MCF 10A (cell line): ENCODE measurements at regions of chr4 and their contacts with region 1.

Region 1: DNA sequence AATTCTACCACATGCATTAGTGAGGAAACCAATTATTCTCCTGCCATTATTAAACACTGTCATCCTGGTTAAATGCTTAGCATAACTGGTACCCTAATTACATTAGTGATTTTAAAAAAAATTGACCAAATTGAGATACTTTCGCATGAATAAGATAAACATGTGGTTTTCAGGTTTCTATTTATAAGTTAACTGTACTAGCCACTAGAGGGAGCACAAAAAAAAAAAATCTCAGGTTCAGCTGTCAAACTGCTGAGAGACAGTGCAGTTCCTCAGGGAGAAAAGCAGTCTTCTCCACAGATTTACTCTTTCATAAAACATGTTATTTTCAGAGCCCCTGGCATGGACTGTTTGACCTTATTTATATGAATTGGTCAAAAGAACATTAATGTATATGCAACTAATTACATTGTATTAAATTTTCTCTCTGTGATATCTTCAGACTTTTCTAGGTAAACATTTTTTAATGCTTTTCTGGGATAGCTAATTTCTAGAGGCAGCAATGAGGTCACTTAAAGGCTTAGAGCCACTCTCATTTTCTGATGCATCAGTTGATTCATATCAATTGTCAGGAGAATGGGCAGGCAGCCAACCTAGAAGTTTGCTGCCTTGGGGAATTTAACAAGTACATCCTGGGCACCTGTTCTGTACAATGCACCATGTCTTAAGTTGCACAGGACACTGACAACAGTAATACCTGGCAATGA is 167.5 kb downstream of the CDS1 start:
- DNase-seq: peak; percentile 51
- H3K4me3 Mint-ChIP-seq: no peak overlapping the region
- H3K27ac Mint-ChIP-seq: no peak overlapping the region
- H3K4me1 Mint-ChIP-seq: no peaks in the 10 kb centered on the region
- H3K27me3 Mint-ChIP-seq: no peaks in the 10 kb centered on the region
- CTCF ChIP-seq: peak; percentile 42

Region 2: DNA sequence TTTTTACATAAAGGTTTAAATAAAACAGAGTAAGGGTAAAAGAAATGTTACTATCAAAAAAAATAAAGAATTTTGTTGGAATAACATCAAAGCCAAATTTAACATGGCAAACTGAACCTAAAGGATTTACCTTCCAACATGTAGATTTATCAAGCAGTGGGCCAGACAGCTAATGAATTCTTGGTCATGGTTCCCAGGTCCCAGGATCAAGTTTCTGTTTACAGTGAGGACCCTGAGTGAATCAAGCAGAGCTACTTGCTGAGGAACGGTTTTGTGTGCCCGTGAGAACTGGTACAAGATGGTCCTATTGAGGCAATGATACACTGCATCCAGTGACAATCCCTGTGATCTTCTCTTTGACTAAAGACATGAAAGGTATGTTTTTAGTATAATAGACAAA is 10.3 kb before region 1 on chr4:
- CTCF ChIA-PET with region 1: interaction called, 11 read pairs
- POLR2A ChIA-PET with region 1: interaction called, 3 read pairs
- intact Hi-C with region 1: no loop called
- DNase-seq: no peak
- H3K4me3 Mint-ChIP-seq: no peak overlapping the region
- H3K27ac Mint-ChIP-seq: no peak overlapping the region
- H3K4me1 Mint-ChIP-seq: no peaks in the 10 kb centered on the region
- H3K27me3 Mint-ChIP-seq: no peaks in the 10 kb centered on the region
- CTCF ChIP-seq: no peak

Region 3: GRCh38 chr4:84780719-84781118 is 30.3 kb after region 1 on chr4:
- CTCF ChIA-PET with region 1: interaction called, 14 read pairs
- POLR2A ChIA-PET with region 1: no interaction called
- intact Hi-C with region 1: no loop called
- DNase-seq: no peak
- H3K4me3 Mint-ChIP-seq: no peak overlapping the region
- H3K27ac Mint-ChIP-seq: no peak overlapping the region
- H3K4me1 Mint-ChIP-seq: no peaks in the 10 kb centered on the region
- H3K27me3 Mint-ChIP-seq: no peaks in the 10 kb centered on the region
- CTCF ChIP-seq: no peak

Region 4: GRCh38 chr4:85180533-85180932 is 430.1 kb after region 1 on chr4:
- CTCF ChIA-PET with region 1: no interaction called
- POLR2A ChIA-PET with region 1: no interaction called
- intact Hi-C with region 1: no loop called
- DNase-seq: no peak
- H3K4me3 Mint-ChIP-seq: no peak overlapping the region
- H3K27ac Mint-ChIP-seq: no peak overlapping the region
- H3K4me1 Mint-ChIP-seq: no peaks in the 10 kb centered on the region
- H3K27me3 Mint-ChIP-seq: no peaks in the 10 kb centered on the region
- CTCF ChIP-seq: no peak

Region 5: GRCh38 chr4:85658766-85659439 is 908.5 kb after region 1 on chr4:
- CTCF ChIA-PET with region 1: no interaction called
- POLR2A ChIA-PET with region 1: no interaction called
- intact Hi-C with region 1: no loop called
- DNase-seq: no peak
- H3K4me3 Mint-ChIP-seq: no peak overlapping the region
- H3K27ac Mint-ChIP-seq: no peak overlapping the region
- H3K4me1 Mint-ChIP-seq: no peaks in the 10 kb centered on the region
- H3K27me3 Mint-ChIP-seq: no peaks in the 10 kb centered on the region
- CTCF ChIP-seq: no peak